ENCODE measurements at regions of chr3 and their contacts with region 1.

Region 1: GRCh38 chr3:114418724-114419543 is 125.1 kb downstream of the TIGIT start:
- DNase-seq: no peak
- H3K4me3 Mint-ChIP-seq: no peak overlapping the region
- H3K27ac Mint-ChIP-seq: peak overlapping the region; percentile 43
- H3K4me1 Mint-ChIP-seq: peaks cover 20% of the 10 kb centered on the region
- H3K27me3 Mint-ChIP-seq: peaks cover 5% of the 10 kb centered on the region

Region 2: DNA sequence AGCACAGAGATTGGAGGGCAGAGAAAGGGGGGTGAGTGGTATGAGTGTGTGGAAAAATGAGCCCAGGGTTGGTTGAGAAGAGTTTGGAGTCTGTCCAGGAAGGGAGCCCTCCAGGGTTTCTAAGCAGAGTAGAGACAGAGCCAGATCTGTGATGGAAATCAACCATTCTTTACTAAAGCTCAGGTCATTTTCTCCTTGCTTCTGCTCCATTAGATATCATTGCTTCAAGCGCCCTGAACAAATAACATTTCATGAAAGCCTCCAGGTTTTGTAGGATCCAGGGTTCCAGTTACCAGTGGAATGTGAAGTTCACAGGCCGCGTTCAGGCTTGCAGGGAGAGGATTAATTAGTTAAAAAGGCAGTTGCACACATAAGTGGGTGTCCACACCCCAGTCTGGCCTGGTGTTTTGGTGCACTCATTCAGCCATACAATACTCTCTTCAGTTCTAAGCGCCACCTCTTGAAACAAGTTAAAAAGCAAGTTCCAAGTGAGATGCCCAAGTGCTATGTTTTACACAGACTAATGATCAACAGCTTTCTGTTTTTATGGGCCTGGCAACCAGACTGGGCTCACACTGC is 1224.0 kb before region 1 on chr3:
- intact Hi-C with region 1: no loop called
- DNase-seq: no peak
- H3K4me3 Mint-ChIP-seq: no peak overlapping the region
- H3K27ac Mint-ChIP-seq: no peak overlapping the region
- H3K4me1 Mint-ChIP-seq: no peaks in the 10 kb centered on the region
- H3K27me3 Mint-ChIP-seq: peaks cover 7% of the 10 kb centered on the region

Region 3: DNA sequence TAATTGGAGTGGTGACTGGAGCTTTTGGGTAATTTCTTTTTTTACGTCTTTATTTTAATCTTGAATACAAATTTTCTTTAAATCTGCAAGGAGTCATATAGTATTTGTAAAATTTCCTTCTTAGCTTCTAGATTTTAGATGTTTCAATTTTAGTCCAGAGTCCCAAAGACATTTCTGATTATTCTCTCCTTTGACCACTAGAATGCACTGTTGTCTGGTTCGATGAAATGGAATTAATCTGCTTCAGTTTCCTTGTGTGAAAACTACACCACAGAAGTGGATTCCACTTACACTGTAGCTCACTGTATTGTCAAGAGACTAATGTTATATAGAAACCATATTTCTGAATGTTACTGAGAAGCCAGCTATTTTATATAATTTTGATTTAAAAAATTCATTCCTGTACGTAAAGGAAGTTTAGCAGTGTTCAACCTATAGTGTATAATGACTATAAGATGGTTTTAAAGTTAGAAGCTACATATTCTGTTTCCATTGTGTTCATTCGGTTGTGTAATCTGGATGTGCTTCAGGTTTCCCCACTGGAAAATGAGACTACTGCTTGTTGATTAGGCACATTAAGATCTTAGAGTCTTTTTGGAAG is 574.2 kb before region 1 on chr3:
- intact Hi-C with region 1: loop called (anchors 1 kb)
- DNase-seq: no peak
- H3K4me3 Mint-ChIP-seq: no peak overlapping the region
- H3K27ac Mint-ChIP-seq: no peak overlapping the region
- H3K4me1 Mint-ChIP-seq: no peaks in the 10 kb centered on the region
- H3K27me3 Mint-ChIP-seq: peaks cover 4% of the 10 kb centered on the region

Region 4: DNA sequence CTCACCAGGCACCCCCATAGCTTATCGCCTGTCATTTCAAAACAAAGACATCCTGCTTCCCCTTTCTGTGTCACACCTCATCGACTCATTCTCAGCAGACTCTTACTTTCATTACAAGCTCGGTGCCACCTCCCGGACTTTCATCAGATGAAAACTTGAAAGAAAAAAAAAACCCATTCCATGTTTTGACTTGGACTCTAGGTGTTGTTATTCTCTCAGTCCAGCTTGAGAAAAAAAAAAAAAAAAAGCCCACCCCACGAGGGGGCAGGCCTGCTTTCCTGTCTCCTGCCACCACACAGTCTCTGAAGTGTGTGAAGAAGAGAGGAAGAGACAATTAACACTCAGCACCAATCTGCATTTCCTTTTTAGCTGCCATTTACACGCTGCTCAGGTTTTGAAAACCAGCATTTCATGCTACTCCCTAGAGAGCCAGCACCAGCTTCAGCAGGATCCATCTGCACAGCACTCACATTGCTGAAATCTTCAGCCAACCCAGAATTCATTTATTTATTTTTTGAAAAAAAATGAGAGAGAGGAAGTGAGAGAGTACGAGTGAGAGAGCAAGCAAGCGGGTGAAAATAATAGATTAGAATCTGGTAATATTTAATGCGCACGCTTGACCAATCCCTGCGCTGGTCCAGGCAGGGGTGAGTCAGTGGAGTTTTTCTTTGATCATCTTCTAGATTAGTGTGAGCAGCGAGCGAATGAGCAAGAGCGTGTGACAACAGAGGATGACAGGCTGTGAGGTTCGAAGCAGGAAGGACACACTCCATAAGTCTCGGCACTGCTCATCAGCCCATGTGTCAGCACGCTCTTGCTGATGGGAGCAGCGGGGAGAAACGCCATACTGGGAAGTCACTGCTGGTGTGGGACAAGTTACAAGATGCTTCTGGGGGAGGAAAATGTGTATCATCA is 205.1 kb before region 1 on chr3:
- intact Hi-C with region 1: loop called (anchors 1 kb)
- DNase-seq: peak; percentile 57
- H3K4me3 Mint-ChIP-seq: no peak overlapping the region
- H3K27ac Mint-ChIP-seq: no peak overlapping the region
- H3K4me1 Mint-ChIP-seq: no peaks in the 10 kb centered on the region
- H3K27me3 Mint-ChIP-seq: no peaks in the 10 kb centered on the region

Region 5: GRCh38 chr3:114285648-114286230 is 133.2 kb before region 1 on chr3:
- intact Hi-C with region 1: no loop called
- DNase-seq: no peak
- H3K4me3 Mint-ChIP-seq: no peak overlapping the region
- H3K27ac Mint-ChIP-seq: peak overlapping the region; percentile 36
- H3K4me1 Mint-ChIP-seq: peaks cover 6% of the 10 kb centered on the region
- H3K27me3 Mint-ChIP-seq: peaks cover 2% of the 10 kb centered on the region

Region 6: GRCh38 chr3:114308830-114309229 is 110.1 kb before region 1 on chr3:
- intact Hi-C with region 1: no loop called
- DNase-seq: peak; percentile 40
- H3K4me3 Mint-ChIP-seq: peak overlapping the region; percentile 13
- H3K27ac Mint-ChIP-seq: peak overlapping the region; percentile 86
- H3K4me1 Mint-ChIP-seq: peaks cover 37% of the 10 kb centered on the region
- H3K27me3 Mint-ChIP-seq: no peaks in the 10 kb centered on the region

Region 7: GRCh38 chr3:114332342-114333179 is 86.4 kb before region 1 on chr3:
- intact Hi-C with region 1: loop called (anchors 1 kb)
- DNase-seq: no peak
- H3K4me3 Mint-ChIP-seq: peak overlapping the region; percentile 20
- H3K27ac Mint-ChIP-seq: peak overlapping the region; percentile 86
- H3K4me1 Mint-ChIP-seq: peaks cover 51% of the 10 kb centered on the region
- H3K27me3 Mint-ChIP-seq: peaks cover 3% of the 10 kb centered on the region

Region 8: GRCh38 chr3:114632757-114633424 is 214.0 kb after region 1 on chr3:
- intact Hi-C with region 1: loop called (anchors 5 kb)
- DNase-seq: no peak
- H3K4me3 Mint-ChIP-seq: no peak overlapping the region
- H3K27ac Mint-ChIP-seq: peak overlapping the region; percentile 60
- H3K4me1 Mint-ChIP-seq: no peaks in the 10 kb centered on the region
- H3K27me3 Mint-ChIP-seq: no peaks in the 10 kb centered on the region

Region 9: GRCh38 chr3:114809668-114810413 is 390.9 kb after region 1 on chr3:
- intact Hi-C with region 1: no loop called
- DNase-seq: no peak
- H3K4me3 Mint-ChIP-seq: no peak overlapping the region
- H3K27ac Mint-ChIP-seq: no peak overlapping the region
- H3K4me1 Mint-ChIP-seq: peaks cover 10% of the 10 kb centered on the region
- H3K27me3 Mint-ChIP-seq: no peaks in the 10 kb centered on the region